Activated CD4-positive, alpha-beta T cell treated with anti-CD3 and anti-CD28 coated beads for 36 hours (primary cell): ENCODE measurements at regions of chr13 and their contacts with region 1.

Region 1: GRCh38 chr13:44577236-44578066 is 1.3 kb upstream of the TSC22D1 start:
- DNase-seq: peak; percentile 97
- ATAC-seq: peak; percentile 79
- H3K4me3 Mint-ChIP-seq: peak overlapping the region; percentile 88
- H3K27ac Mint-ChIP-seq: peak overlapping the region; percentile 87
- H3K4me1 Mint-ChIP-seq: peaks cover 38% of the 10 kb centered on the region
- H3K27me3 Mint-ChIP-seq: peaks cover 6% of the 10 kb centered on the region

Region 2: GRCh38 chr13:44197791-44198770 is 379.4 kb before region 1 on chr13:
- CTCF ChIA-PET with region 1: no interaction called
- POLR2A ChIA-PET with region 1: no interaction called
- intact Hi-C with region 1: loop called in 1 of 2 experiments (anchors 5 kb)
- DNase-seq: peak; percentile 65
- ATAC-seq: peak; percentile 91
- H3K4me3 Mint-ChIP-seq: no peak overlapping the region
- H3K27ac Mint-ChIP-seq: no peak overlapping the region
- H3K4me1 Mint-ChIP-seq: peaks cover 40% of the 10 kb centered on the region
- H3K27me3 Mint-ChIP-seq: peaks cover 28% of the 10 kb centered on the region

Region 3: DNA sequence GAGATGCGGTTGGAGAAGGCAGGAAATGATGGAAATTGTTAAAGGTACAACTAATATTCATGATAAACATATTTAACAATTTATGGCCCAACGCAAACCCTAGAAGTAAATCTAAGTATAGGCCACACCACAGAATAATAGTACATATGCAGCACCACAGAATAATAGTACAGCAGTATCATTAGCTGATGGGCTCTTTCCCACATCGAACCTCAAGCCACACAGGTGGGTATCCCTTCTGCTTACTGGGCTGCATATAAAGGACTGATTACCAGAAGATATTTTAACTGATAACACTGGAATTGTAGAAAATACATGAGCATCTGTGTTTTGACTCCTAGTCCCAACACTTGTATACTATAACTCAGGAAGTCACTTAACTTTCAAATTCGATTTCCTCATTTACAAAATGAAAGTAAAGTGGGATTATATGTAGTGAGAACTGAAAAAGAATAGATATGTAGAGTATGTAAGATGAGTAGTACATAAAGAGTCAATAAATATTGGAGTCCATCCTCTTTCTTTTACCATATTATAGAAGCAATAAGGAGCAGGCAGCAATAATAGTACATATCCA is 92.8 kb before region 1 on chr13:
- CTCF ChIA-PET with region 1: interaction called, 5 read pairs
- POLR2A ChIA-PET with region 1: no interaction called
- intact Hi-C with region 1: loop called (anchors 2 kb)
- DNase-seq: no peak
- ATAC-seq: peak; percentile 44
- H3K4me3 Mint-ChIP-seq: peak overlapping the region; percentile 38
- H3K27ac Mint-ChIP-seq: peak overlapping the region; percentile 20
- H3K4me1 Mint-ChIP-seq: peaks cover 13% of the 10 kb centered on the region
- H3K27me3 Mint-ChIP-seq: no peaks in the 10 kb centered on the region

Region 4: GRCh38 chr13:44667943-44668342 is 90.5 kb after region 1 on chr13:
- CTCF ChIA-PET with region 1: no interaction called
- POLR2A ChIA-PET with region 1: no interaction called
- intact Hi-C with region 1: no loop called
- DNase-seq: no peak
- ATAC-seq: no peak
- H3K4me3 Mint-ChIP-seq: no peak overlapping the region
- H3K27ac Mint-ChIP-seq: no peak overlapping the region
- H3K4me1 Mint-ChIP-seq: no peaks in the 10 kb centered on the region
- H3K27me3 Mint-ChIP-seq: peaks cover 6% of the 10 kb centered on the region

Region 5: GRCh38 chr13:44768239-44768638 is 190.8 kb after region 1 on chr13:
- CTCF ChIA-PET with region 1: interaction called, 4 read pairs
- POLR2A ChIA-PET with region 1: no interaction called
- intact Hi-C with region 1: loop called in 1 of 2 experiments (anchors 1 kb)
- DNase-seq: peak; percentile 69
- ATAC-seq: peak; percentile 70
- H3K4me3 Mint-ChIP-seq: peak overlapping the region; percentile 5
- H3K27ac Mint-ChIP-seq: peak overlapping the region; percentile 90
- H3K4me1 Mint-ChIP-seq: peaks cover 28% of the 10 kb centered on the region
- H3K27me3 Mint-ChIP-seq: no peaks in the 10 kb centered on the region

Region 6: GRCh38 chr13:44988973-44989817 is 411.7 kb after region 1 on chr13 and contains the starts of genes GPALPP1 and NUFIP1:
- CTCF ChIA-PET with region 1: no interaction called
- POLR2A ChIA-PET with region 1: no interaction called
- intact Hi-C with region 1: loop called in 1 of 2 experiments (anchors 1 kb)
- DNase-seq: peak; percentile 97
- ATAC-seq: peak; percentile 99
- H3K4me3 Mint-ChIP-seq: peak within 1 kb of the TSS; percentile 98
- H3K27ac Mint-ChIP-seq: peak within 1 kb of the TSS; percentile 96
- H3K4me1 Mint-ChIP-seq: peaks cover 57% of the 10 kb centered on the region
- H3K27me3 Mint-ChIP-seq: no peaks in the 10 kb centered on the region
- total RNA-seq, gene GPALPP1: 31.8 to 40.5 TPM
- total RNA-seq, gene NUFIP1: 10.1 to 13.6 TPM

Region 7: GRCh38 chr13:45340926-45341750 is 763.7 kb after region 1 on chr13 and contains the start of gene TPT1:
- CTCF ChIA-PET with region 1: no interaction called
- POLR2A ChIA-PET with region 1: no interaction called
- intact Hi-C with region 1: loop called in 1 of 2 experiments (anchors 1 kb)
- DNase-seq: peak; percentile 100
- ATAC-seq: peak; percentile 85
- H3K4me3 Mint-ChIP-seq: peak within 1 kb of the TSS; percentile 99
- H3K27ac Mint-ChIP-seq: peak within 1 kb of the TSS; percentile 99
- H3K4me1 Mint-ChIP-seq: peaks cover 45% of the 10 kb centered on the region
- H3K27me3 Mint-ChIP-seq: no peaks in the 10 kb centered on the region
- total RNA-seq, gene TPT1: 3,408 to 3,964 TPM